ENCODE measurements at regions of chr11 and their contacts with region 1.

Region 1: GRCh38 chr11:119666463-119667131 is 62.4 kb downstream of the NECTIN1 start:
- DNase-seq: peak; percentile 65
- H3K4me3 ChIP-seq: no peak overlapping the region
- H3K27ac ChIP-seq: no peak overlapping the region
- H3K4me1 ChIP-seq: peaks cover 8% of the 10 kb centered on the region
- H3K27me3 ChIP-seq: no peaks in the 10 kb centered on the region
- CTCF ChIP-seq: peak; percentile 87 to 95
- POLR2A ChIP-seq: no peak

Region 2: GRCh38 chr11:120013325-120014270 is 347.0 kb after region 1 on chr11:
- CTCF ChIA-PET with region 1: no interaction called
- POLR2A ChIA-PET with region 1: no interaction called
- dilution Hi-C with region 1: no loop called
- intact Hi-C with region 1: loop called (anchors 1 kb)
- DNase-seq: peak; percentile 12
- H3K4me3 ChIP-seq: no peak overlapping the region
- H3K27ac ChIP-seq: no peak overlapping the region
- H3K4me1 ChIP-seq: no peaks in the 10 kb centered on the region
- H3K27me3 ChIP-seq: no peaks in the 10 kb centered on the region
- CTCF ChIP-seq: peak; percentile 32 to 65
- POLR2A ChIP-seq: no peak

Measured in endothelial cell of umbilical vein (primary cell).